Cardiac septum (tissue), 1 donor: ENCODE measurements at regions of chr22 and their contacts with region 1.

Region 1: DNA sequence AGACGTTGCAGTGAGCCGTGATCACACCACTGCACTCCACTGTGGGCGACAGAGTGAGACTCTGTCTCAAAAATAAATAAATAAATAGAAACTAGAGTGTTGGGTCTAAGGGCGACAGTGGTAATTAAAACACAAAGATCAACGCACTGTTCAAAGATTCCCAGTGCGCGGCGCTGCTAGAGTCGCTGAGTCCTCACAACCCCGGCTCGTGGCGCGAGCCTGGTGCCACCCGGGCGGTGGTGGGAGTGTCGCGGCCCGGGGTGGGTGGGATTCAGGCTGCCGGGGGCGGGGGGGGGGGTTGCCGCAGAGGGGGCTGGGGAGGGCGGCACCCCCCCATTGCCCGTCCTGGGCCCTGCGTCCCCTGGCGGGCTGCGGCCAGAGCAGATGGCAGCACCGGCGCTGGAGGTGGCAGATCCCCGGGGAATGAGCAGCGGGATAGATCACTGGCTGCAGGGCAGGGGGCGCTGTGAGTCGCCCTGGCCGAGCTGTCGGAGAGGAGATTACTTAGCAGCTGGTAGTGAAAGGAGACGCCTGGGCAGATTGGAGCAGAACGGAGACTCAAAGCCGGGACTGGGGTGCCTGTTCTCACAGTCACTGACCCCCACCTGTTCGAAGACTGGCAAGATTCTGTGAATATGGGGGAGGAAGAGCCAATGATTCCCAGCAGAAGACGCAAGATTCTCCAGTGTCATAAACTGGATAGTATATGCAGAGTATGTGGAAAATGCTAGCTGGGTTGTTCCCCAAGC is 30.2 kb upstream of the APOBEC3A start:
- DNase-seq: peak; percentile 93

Region 2: DNA sequence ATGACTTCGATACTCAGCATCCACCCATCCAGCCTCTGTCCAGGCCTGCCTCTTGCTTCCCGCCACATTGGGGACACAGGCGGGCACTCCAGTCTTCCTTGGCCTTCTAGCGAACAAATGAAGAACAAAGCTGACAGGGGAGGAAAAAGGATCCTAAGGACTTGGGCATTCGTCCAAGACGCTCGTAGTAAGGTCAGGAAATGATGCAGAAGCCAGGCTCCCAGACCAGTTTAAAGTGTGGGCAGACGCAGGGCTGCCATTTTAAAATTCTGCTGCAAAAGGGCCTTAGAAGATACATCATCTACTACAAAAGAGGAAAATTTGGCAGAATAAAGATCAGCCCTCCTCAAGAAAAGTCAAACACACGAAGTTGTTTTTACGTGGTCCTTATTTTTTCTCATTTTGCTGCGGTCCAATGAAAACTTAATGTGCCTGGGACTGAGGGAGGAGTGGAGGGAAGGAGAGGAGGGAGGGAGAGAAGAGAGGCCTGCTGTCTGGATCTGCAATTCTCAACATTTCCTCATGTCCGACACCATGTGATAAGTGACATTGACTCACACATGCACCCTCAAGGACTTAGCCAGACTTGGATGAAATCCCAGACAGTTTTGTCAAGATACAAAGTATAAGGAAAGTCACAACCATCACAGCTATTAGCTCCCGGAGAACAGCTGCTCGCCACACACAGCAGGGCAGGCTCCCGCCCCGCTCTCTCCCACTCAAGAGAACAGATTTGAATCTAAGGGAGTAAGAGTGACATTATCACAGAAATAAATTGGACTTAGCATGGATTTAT is 139.0 kb before region 1 on chr22:
- intact Hi-C with region 1: loop called (anchors 10 kb)
- DNase-seq: no peak

Region 3: DNA sequence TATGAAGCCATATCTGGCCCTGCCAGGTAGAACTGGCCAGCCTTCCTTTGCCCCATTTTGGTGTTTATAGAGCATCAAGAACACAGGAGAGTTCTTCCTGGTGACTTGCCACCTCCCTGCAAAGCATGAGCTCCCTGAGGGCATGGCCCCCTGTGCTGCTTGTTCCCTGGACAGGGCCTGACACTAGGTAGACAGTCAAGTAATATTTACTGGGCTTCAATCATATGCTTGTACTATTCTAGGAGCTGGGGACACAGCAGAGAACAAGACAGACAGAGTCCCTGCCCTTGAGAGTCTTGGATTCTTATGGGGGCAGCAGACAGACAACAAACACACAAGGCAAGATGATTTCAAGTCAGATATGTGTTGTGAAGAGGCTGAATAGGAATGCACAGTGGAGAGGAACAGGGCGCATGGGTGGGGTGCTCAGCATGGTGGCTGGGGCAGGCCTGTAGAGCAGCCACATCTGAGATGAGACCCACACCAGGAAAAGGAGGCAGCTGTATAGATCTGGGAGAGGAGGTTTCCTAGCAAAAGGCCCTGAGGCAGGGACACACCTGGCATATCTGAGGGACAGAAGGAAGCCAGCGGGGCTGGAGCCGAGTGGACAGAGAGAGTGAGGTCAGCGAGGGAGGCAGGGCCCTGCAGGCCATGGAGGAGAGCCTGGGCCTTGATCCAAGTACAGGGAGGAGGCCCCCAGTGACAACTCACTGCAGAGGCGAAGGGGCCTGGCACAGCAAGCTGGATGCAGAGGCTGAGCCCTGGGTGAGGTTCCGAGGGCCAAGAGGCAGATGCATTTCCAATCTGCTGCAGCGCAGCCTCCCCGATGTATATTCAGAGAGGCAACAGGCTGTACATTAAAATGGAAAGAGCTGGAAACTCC is 45.0 kb before region 1 on chr22:
- intact Hi-C with region 1: loop called (anchors 2 kb)
- DNase-seq: peak; percentile 54

Region 4: GRCh38 chr22:39135090-39135896 is 208.1 kb after region 1 on chr22:
- intact Hi-C with region 1: no loop called
- DNase-seq: no peak